ENCODE measurements at regions of chrX and their contacts with region 1.

Region 1: GRCh38 chrX:98405376-98405775 is 1521.7 kb downstream of the RPA4 start:
- DNase-seq: no peak
- H3K4me3 ChIP-seq: no peak overlapping the region
- H3K27ac ChIP-seq: no peak overlapping the region
- H3K4me1 ChIP-seq: no peaks in the 10 kb centered on the region
- H3K27me3 ChIP-seq: no peaks in the 10 kb centered on the region
- CTCF ChIP-seq: no peak
- EP300 ChIP-seq: no peak
- POLR2A ChIP-seq: no peak

Region 2: GRCh38 chrX:98448524-98448923 is 43.1 kb after region 1 on chrX:
- intact Hi-C with region 1: loop called (anchors 1 kb)
- DNase-seq: no peak
- H3K4me3 ChIP-seq: no peak overlapping the region
- H3K27ac ChIP-seq: no peak overlapping the region
- H3K4me1 ChIP-seq: no peaks in the 10 kb centered on the region
- H3K27me3 ChIP-seq: no peaks in the 10 kb centered on the region
- CTCF ChIP-seq: no peak
- EP300 ChIP-seq: no peak
- POLR2A ChIP-seq: no peak

Measured in esophagus muscularis mucosa (tissue), 4 donors.